Gastrocnemius medialis (tissue), 4 donors: ENCODE measurements at regions of chr5 and their contacts with region 1.

Region 1: DNA sequence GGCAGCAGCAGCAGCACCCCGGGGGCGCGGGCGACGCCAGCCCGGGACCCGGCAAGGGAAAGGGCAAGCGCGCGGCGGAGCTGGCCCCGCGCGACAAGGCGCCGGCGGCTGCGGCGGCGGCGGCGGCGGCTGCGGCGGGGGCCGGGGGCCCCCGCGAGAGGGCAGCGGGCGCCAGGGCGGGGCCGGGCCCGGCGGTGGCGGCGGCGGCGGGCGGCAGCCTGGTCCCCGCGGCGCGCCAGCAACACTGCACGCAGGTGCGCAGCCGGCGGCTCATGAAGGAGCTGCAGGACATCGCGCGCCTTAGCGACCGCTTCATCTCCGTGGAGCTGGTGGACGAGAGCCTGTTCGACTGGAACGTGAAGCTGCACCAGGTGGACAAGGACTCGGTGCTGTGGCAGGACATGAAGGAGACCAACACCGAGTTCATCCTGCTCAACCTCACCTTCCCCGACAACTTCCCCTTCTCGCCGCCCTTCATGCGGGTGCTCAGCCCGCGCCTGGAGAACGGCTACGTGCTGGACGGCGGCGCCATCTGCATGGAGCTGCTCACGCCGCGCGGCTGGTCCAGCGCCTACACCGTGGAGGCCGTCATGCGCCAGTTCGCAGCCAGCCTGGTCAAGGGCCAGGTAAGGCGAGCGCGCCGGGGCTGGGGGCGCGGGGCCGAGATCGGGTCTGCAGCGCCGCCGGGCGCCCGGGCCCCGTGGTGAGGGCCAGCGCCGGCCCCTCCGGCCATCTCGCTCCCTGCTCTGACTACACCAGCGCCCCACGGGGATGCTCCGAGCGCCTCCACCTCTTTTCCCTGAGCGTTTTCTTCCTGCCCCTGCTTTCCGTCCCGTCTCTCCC is at the start of gene UBE2QL1:
- DNase-seq: peak in 1 of 2 donors; percentile 38
- ATAC-seq: peak; percentile 13 to 37
- H3K4me3 ChIP-seq: peak within 1 kb of the TSS; percentile 58 to 78 (median 71)
- H3K27ac ChIP-seq: peak within 1 kb of the TSS; percentile 91 to 97 (median 96)
- H3K4me1 ChIP-seq: peaks cover 13 to 17% of the 10 kb centered on the region in 2 donors
- H3K27me3 ChIP-seq: no peaks in the 10 kb centered on the region
- CTCF ChIP-seq: no peak
- POLR2A ChIP-seq: peak; percentile 36 to 71
- total RNA-seq, gene UBE2QL1: 48.8 to 150 (median 67.0) TPM

Region 2: GRCh38 chr5:5886812-5887486 is 561.9 kb before region 1 on chr5:
- in situ Hi-C with region 1: no loop called
- intact Hi-C with region 1: loop called (anchors 10 kb)
- DNase-seq: peak in 1 of 2 donors; percentile 15
- ATAC-seq: peak; percentile 44 to 58
- H3K4me3 ChIP-seq: no peak overlapping the region
- H3K27ac ChIP-seq: no peak overlapping the region
- H3K4me1 ChIP-seq: no peaks in the 10 kb centered on the region
- H3K27me3 ChIP-seq: peaks cover 0 to 2% (median 0%) of the 10 kb centered on the region in 3 donors
- CTCF ChIP-seq: peak in 4 of 5 experiments; percentile 24 to 81 (median 62)
- POLR2A ChIP-seq: no peak

Region 3: DNA sequence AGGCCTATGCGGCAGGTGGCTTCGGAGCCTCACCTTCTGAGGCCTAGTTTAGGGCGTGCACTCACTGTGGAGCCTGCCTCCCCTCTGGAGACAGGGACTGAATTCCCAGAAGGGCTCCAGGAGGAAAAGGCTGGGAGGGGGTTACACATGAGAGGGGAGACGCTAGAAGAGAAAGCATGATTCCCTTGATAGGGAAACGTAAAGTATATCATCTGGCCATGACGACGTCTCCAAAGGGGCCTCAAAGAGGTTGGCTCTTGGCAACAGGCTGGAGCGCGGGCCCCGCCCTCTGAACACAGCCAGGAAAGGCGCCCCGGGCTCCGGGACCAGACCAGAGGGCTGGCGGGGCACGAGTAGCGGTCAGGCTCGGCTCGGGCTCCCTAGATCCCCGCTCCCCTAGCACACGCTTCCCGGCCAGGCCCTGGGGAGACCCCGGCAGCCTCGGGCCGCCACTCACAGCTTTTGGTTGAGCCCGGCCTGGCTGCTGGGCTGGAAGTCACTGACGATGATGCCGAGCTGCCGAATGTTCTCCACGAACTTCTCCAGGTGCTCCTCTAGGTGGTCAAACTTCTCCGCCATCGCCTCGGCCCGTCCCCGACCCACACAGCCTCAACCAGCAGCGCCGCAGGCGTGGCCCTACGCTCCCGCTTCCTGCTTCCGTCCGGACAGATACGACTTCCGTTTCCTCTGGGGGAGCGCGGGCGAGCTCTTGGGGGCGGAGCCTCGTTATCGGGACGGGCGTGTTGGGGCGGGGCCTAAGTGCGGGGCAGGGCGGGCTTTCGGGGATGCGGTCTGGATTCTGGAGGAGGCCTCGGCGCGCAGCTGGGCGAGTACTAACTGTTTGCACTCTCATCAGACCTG is 70.7 kb before region 1 on chr5 and contains the start of gene MED10:
- in situ Hi-C with region 1: no loop called
- intact Hi-C with region 1: loop called (anchors 5 kb)
- DNase-seq: peak; percentile 89 to 92
- ATAC-seq: peak; percentile 97 to 98
- H3K4me3 ChIP-seq: peak within 1 kb of the TSS; percentile 77 to 97 (median 87)
- H3K27ac ChIP-seq: peak within 1 kb of the TSS; percentile 78 to 92 (median 86)
- H3K4me1 ChIP-seq: peaks cover 17% of the 10 kb centered on the region in 2 donors
- H3K27me3 ChIP-seq: no peaks in the 10 kb centered on the region
- CTCF ChIP-seq: no peak
- POLR2A ChIP-seq: peak; percentile 62 to 79
- total RNA-seq, gene MED10: 15.9 to 37.5 (median 32.2) TPM

Region 4: GRCh38 chr5:6468104-6468503 is 19.3 kb after region 1 on chr5:
- in situ Hi-C with region 1: no loop called
- intact Hi-C with region 1: no loop called
- DNase-seq: no peak
- ATAC-seq: no peak
- H3K4me3 ChIP-seq: no peak overlapping the region
- H3K27ac ChIP-seq: no peak overlapping the region
- H3K4me1 ChIP-seq: peaks cover 25 to 41% of the 10 kb centered on the region in 2 donors
- H3K27me3 ChIP-seq: no peaks in the 10 kb centered on the region
- CTCF ChIP-seq: no peak
- POLR2A ChIP-seq: no peak

Region 5: GRCh38 chr5:6551287-6551954 is 102.6 kb after region 1 on chr5:
- in situ Hi-C with region 1: loop called in 2 of 4 experiments (anchors 10 kb)
- intact Hi-C with region 1: loop called (anchors 1 kb)
- DNase-seq: peak; percentile 93 to 97
- ATAC-seq: peak; percentile 93
- H3K4me3 ChIP-seq: peak overlapping the region in 3 of 4 donors; percentile 10 to 41 (median 25)
- H3K27ac ChIP-seq: peak overlapping the region; percentile 82 to 88 (median 84)
- H3K4me1 ChIP-seq: peaks cover 15 to 16% of the 10 kb centered on the region in 2 donors
- H3K27me3 ChIP-seq: no peaks in the 10 kb centered on the region
- CTCF ChIP-seq: no peak
- POLR2A ChIP-seq: peak in 1 of 2 donors; percentile 50

Region 6: GRCh38 chr5:7762267-7762666 is 1313.4 kb after region 1 on chr5:
- in situ Hi-C with region 1: no loop called
- intact Hi-C with region 1: loop called (anchors 5 kb)
- DNase-seq: peak in 1 of 2 donors; percentile 53
- ATAC-seq: no peak
- H3K4me3 ChIP-seq: no peak overlapping the region
- H3K27ac ChIP-seq: peak overlapping the region; percentile 78 to 89 (median 84)
- H3K4me1 ChIP-seq: peaks cover 14 to 50% of the 10 kb centered on the region in 2 donors
- H3K27me3 ChIP-seq: no peaks in the 10 kb centered on the region
- CTCF ChIP-seq: peak in 2 of 5 experiments; percentile 26 to 31
- POLR2A ChIP-seq: no peak